GM10248 (cell line): ENCODE measurements at regions of chr20 and their contacts with region 1.

Region 1: GRCh38 chr20:53736757-53737395 is 143.2 kb upstream of the ZNF217 start:
- DNase-seq: peak; percentile 43
- CTCF ChIP-seq: no peak

Region 2: GRCh38 chr20:53693262-53693871 is 43.5 kb before region 1 on chr20:
- CTCF ChIA-PET with region 1: no interaction called
- POLR2A ChIA-PET with region 1: no interaction called
- DNase-seq: no peak
- CTCF ChIP-seq: no peak

Region 3: GRCh38 chr20:53750827-53751619 is 14.1 kb after region 1 on chr20:
- CTCF ChIA-PET with region 1: interaction called, 17 read pairs
- POLR2A ChIA-PET with region 1: interaction called, 3 read pairs
- DNase-seq: peak; percentile 38
- CTCF ChIP-seq: no peak